ENCODE measurements at regions of chr17 and their contacts with region 1.

Region 1: GRCh38 chr17:31524926-31525800 is 133.7 kb downstream of the RAB11FIP4 start:
- DNase-seq: no peak
- ATAC-seq: peak; percentile 92
- H3K4me3 ChIP-seq: no peak overlapping the region
- H3K27ac ChIP-seq: no peak overlapping the region
- H3K4me1 ChIP-seq: no peaks in the 10 kb centered on the region
- H3K27me3 ChIP-seq: no peaks in the 10 kb centered on the region
- CTCF ChIP-seq: peak; percentile 94

Region 2: DNA sequence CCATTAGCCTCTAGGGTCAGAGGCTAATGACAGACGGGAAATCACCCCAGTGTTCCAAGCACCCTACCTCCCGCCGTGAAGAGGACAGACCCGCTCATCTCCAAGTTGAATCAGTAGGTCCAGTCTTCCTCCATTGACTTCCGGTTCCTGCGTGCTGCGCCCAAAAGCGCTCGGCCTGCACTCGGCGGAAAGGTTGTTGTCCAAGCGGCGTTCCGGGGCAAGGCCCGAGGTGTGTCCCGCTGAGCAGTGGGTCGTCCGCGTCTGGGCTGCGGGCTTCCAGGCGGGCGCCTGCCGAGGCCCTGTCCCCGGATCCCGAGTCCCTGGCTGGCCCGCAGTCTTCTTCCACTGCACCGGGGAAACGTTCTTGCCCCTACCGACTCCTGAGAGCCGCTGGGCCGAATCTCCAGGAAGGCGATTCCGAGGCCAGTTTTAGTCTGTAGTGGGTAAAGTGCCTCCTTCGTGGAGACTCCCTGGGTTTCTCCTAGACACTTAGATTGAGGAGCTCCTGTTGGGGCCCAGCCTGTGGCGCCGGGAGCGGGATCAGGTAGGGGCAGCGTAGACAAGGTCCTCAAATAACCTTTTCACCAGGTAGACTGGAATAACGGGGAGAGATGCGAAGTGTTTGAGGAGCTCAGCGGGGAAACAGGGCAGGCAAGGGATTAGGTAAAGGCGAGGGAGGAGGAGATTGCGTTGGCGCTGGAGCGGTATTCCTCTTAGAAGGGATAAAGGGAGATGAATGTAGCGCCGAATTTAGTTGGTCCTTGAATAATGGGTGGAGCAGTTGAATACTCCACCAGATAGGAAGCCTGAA is 618.9 kb before region 1 on chr17 and contains the start of gene TEFM:
- CTCF ChIA-PET with region 1: no interaction called
- POLR2A ChIA-PET with region 1: no interaction called
- in situ Hi-C with region 1: no loop called
- intact Hi-C with region 1: no loop called
- DNase-seq: peak; percentile 72
- ATAC-seq: peak; percentile 98
- H3K4me3 ChIP-seq: peak within 1 kb of the TSS; percentile 88 to 99
- H3K27ac ChIP-seq: peak within 1 kb of the TSS; percentile 95
- H3K4me1 ChIP-seq: no peaks in the 10 kb centered on the region
- H3K27me3 ChIP-seq: no peaks in the 10 kb centered on the region
- CTCF ChIP-seq: no peak
- total RNA-seq, gene TEFM: 13.0 TPM

Region 3: DNA sequence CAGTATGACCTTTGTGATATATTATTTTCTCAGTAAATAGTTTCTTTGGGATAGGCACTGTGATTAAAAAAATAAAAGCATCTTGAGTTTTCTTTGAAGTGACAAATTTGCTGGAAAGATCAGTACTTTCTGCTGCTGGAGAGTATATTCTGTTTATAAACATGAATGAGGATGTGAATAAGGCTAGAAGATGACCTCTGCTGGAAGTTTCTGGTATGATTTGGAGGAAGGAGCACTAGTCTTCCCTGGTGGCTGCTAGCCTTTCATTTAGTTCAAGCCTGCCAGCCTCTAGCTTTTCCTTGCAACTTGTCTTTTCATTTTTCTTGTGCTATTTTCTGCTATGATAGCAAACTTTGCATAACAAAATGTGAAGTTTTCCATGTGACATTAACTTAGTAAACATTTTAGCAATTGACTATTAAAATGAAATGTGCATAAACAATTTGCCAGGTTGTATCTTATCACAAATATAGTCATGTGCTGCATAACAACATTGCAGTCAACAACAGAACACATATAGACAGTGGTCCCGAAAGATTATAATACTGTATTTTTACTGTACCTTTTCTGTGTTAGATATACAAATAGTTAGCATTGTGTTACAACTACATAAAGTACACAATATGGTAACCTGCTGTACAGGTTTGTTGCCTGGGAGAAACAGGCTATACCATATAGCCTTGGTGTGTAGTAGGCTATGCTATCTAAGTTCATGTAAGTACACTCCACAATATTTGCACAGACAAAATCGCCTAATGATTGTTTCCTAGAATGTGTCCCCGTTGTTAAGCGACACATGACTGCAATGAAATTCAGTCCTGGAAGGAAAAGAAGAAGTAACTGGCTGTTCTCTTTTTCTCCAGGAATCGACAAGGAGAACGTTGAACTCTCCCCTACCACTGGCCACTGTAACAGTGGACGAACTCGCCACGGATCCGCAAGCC is 151.7 kb before region 1 on chr17:
- CTCF ChIA-PET with region 1: no interaction called
- POLR2A ChIA-PET with region 1: no interaction called
- in situ Hi-C with region 1: no loop called
- intact Hi-C with region 1: no loop called
- DNase-seq: peak; percentile 20
- ATAC-seq: peak; percentile 94
- H3K4me3 ChIP-seq: no peak overlapping the region
- H3K27ac ChIP-seq: no peak overlapping the region
- H3K4me1 ChIP-seq: no peaks in the 10 kb centered on the region
- H3K27me3 ChIP-seq: no peaks in the 10 kb centered on the region
- CTCF ChIP-seq: peak; percentile 64; the same call in 1 of the 2 replicates

Region 4: DNA sequence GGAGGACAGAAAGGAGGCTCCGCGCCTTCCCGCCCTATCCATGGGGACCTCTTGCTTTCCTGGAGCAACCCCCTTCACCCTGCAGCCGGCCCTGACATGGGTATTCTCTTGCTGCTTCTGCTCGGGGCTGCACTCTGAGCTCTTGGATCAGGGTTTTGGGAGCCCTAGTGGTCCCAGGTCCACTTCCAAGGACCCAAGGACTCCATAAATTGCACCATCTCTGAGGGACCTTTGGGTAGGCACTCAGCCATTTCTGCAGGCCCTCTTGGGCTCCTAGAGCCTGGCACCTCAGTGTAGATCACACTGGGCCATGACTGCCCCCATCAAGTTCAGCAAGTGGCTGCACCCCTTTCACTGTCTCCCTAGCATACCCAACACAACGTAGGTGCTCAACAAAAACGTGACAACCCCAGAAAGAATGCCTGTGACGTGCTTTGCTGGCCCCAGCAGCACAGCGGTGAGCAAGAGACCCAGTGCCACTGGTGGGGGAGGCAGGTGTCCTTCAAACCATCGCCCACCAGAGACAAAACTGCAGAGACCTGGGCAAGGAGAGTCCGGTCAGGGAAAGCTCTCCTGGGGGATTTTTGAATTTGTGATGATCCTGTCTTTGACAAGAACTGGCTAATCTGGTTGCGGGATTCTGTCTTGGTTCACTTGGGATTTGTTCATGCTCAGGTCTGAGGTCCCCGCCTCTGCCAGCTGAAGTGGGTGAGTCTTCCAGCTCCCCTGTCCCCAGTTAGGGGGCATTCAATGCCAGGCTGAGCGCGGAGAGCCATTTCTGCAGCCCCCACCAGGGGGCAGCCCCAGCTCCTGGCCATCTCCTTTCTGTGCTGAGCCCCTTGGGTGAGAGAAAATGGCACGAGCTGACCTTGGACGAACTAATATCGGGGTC is 136.1 kb before region 1 on chr17:
- CTCF ChIA-PET with region 1: no interaction called
- POLR2A ChIA-PET with region 1: no interaction called
- in situ Hi-C with region 1: no loop called
- intact Hi-C with region 1: loop called (anchors 5 kb)
- DNase-seq: peak; percentile 12
- ATAC-seq: peak; percentile 49
- H3K4me3 ChIP-seq: no peak overlapping the region
- H3K27ac ChIP-seq: no peak overlapping the region
- H3K4me1 ChIP-seq: no peaks in the 10 kb centered on the region
- H3K27me3 ChIP-seq: no peaks in the 10 kb centered on the region
- CTCF ChIP-seq: peak; percentile 88

Region 5: DNA sequence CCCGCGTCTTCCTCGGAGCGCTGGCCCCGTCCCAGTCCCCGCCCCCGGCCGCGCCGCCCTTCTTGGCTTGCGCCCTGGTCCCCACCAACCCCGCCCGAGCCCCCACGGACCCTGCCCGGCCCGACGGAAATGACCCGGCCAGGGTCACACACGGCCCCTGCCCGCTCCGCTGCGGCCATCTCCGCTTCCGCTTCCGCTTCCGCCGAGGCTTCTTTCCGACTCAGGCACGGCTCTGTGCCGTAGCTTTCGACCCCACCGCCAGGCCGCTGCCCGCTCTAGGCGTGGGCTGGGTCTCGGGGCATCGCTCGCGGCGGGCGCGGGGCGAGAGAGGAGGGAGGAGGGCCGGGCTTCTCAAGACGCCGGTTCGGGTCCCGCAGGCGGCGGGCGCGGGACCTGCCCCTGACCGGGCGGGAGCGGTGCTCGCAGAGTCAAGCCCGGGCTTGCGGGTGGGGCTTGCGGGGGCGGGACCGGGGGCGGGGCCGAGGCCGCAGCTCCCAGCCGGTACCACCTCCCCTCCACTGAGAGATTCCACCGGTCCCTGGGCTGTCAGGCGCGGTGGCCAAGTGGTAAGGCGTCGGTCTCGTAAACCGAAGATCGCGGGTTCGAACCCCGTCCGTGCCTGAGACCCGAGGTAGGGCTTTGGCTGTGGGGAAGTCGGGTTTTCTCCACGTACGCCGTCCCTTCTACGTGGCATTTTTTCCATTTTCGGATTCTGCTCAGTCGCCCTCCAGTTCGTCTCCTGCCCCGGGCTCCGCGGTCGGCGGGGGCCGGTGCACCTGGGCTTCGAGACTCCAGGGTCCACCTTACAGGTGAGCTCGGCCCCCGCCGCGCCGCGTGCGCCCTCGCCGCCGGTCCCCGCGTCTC is 24.6 kb after region 1 on chr17:
- CTCF ChIA-PET with region 1: no interaction called
- POLR2A ChIA-PET with region 1: no interaction called
- in situ Hi-C with region 1: no loop called
- intact Hi-C with region 1: no loop called
- DNase-seq: peak; percentile 83
- ATAC-seq: peak; percentile 94
- H3K4me3 ChIP-seq: peak overlapping the region; percentile 73 to 88
- H3K27ac ChIP-seq: peak overlapping the region; percentile 93
- H3K4me1 ChIP-seq: 0 out of 2 replicates have a peak, but pooled peaks cover 5% of the 10 kb centered on the region
- H3K27me3 ChIP-seq: no peaks in the 10 kb centered on the region
- CTCF ChIP-seq: no peak

Region 6: DNA sequence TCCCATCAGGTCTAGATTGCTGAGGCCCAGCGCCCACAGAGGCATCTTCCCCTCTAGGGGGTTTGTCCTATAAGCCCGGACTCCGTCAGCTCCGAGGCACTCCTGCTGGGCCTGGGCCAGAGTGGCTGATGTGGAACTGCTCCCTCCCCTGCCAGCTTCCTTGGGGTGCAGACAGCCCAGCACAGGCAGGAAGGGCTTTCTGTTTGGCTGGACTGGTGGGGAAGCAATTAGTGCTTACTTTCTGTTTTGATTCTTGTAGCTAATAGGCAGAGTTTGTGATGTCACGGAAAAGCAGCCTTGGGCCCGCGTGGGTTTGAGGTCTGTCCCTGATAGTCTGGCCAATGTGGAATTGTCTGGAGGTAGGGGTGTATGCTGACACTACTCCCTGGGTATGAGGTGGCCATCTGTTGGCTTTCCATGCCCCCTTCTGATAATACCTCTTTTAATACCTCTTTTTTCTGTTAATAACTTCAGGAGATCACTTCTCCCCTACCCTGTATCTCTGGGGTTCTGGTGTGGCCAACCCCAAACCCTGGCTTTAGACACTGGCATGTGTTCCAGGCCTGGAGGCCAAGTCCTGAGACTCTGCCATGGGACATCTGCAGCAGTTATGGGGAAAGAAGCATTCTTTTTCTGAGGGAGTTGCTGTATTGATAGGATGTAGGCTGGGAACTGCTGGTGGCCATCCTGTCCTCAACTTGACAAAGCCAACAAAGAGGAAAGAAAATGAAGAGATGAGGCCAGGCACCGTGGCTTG is 57.2 kb after region 1 on chr17:
- CTCF ChIA-PET with region 1: no interaction called
- POLR2A ChIA-PET with region 1: no interaction called
- in situ Hi-C with region 1: no loop called
- intact Hi-C with region 1: no loop called
- DNase-seq: no peak
- ATAC-seq: no peak
- H3K4me3 ChIP-seq: no peak overlapping the region
- H3K27ac ChIP-seq: peak overlapping the region; percentile 84
- H3K4me1 ChIP-seq: peaks cover 42% of the 10 kb centered on the region
- H3K27me3 ChIP-seq: no peaks in the 10 kb centered on the region
- CTCF ChIP-seq: no peak

Measured in Panc1 (cell line).